Mammary epithelial cell (primary cell): ENCODE measurements at regions of chr2 and their contacts with region 1.

Region 1: GRCh38 chr2:239636808-239637207 is 236.0 kb upstream of the HDAC4 start:
- DNase-seq: no peak
- H3K4me3 ChIP-seq: no peak overlapping the region
- H3K27ac ChIP-seq: no peak overlapping the region
- H3K4me1 ChIP-seq: no peaks in the 10 kb centered on the region
- H3K27me3 ChIP-seq: no peaks in the 10 kb centered on the region
- CTCF ChIP-seq: no peak

Region 2: GRCh38 chr2:239143858-239144718 is 492.7 kb before region 1 on chr2:
- CTCF ChIA-PET with region 1: no interaction called
- dilution Hi-C with region 1: no loop called
- in situ Hi-C with region 1: no loop called
- intact Hi-C with region 1: no loop called
- DNase-seq: no peak
- H3K4me3 ChIP-seq: no peak overlapping the region
- H3K27ac ChIP-seq: no peak overlapping the region
- H3K4me1 ChIP-seq: no peaks in the 10 kb centered on the region
- H3K27me3 ChIP-seq: no peaks in the 10 kb centered on the region
- CTCF ChIP-seq: peak; percentile 50 to 65

Region 3: DNA sequence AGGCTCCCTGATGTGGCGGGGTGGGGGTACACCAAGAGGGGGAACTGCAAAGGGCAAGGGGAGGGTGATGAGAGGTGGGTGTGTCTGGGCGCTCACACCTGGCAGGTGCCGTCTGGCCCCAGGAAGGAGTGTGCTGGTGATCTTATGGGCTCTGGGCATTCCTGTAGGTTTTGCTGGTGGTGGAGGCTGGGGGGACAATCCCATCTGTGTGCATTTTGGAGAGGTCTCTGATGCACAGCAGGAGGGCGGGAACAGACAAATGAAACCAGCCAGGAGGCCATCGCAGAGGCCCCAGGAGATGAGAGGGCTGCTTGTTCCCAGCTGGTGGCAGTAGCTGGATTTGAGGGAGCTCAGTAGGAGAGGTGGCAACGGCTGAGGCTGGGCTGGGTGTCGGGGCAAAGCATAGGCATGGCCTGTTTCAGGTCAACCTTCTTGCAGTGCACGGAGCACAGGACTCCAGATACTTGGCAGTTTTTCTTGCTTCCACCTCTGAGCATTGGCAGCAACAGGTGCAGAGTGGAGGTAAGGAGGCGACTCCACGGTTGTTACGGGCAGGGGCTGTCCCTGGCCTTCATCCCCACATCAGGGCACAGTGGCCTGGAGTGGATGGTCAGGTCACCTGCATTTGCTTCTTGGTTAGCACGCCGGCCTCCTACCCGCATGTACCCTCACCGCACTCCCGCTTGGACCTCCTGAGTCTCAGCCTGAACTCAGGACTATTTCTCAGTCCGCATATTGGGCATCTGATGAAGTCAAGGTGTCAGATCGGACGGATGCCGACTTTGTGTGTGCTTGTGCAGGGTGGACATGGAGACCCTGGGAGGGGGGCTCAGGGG is 41.8 kb before region 1 on chr2:
- CTCF ChIA-PET with region 1: no interaction called
- dilution Hi-C with region 1: loop called (anchors 5 kb)
- in situ Hi-C with region 1: no loop called
- intact Hi-C with region 1: no loop called
- DNase-seq: no peak
- H3K4me3 ChIP-seq: no peak overlapping the region
- H3K27ac ChIP-seq: no peak overlapping the region
- H3K4me1 ChIP-seq: no peaks in the 10 kb centered on the region
- H3K27me3 ChIP-seq: no peaks in the 10 kb centered on the region
- CTCF ChIP-seq: no peak

Region 4: DNA sequence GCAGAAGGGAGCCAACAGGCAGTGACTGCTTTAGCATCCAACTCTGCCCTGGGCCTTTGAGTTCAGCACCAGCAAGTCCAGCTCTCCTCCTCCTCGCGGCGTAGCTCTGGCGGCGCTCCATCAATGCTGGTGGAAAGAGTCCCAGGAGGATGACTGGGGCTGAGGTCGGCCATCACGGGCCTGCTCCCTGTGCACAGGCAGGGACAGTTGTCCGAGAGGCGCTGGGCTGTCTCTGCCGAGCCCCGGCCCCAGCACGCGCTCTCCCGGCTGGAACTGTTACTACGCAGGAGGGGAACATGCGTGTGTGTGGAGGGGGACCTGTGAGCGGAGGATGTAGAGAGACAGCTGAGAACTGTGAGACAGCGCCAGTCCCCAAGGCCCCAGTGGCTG is 91.4 kb after region 1 on chr2:
- CTCF ChIA-PET with region 1: no interaction called
- dilution Hi-C with region 1: loop called (anchors 5 kb)
- in situ Hi-C with region 1: no loop called
- intact Hi-C with region 1: no loop called
- DNase-seq: no peak
- H3K4me3 ChIP-seq: no peak overlapping the region
- H3K27ac ChIP-seq: no peak overlapping the region
- H3K4me1 ChIP-seq: no peaks in the 10 kb centered on the region
- H3K27me3 ChIP-seq: no peaks in the 10 kb centered on the region
- CTCF ChIP-seq: no peak

Region 5: DNA sequence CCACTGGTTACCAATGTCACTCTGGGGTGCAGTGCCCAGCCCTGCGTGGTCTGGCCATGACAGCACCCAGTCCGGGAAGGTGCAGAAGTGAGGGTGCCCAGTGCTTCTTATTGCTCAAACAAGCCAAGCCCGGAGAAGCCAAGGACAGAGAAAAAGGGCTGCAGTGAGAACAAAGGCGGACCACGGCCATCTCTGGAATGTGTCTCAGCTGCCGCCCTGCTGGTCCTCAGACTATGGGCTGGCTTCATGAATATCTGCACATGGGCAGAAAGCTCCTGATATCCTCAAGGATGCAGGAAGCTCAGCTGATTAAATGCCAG is 470.6 kb after region 1 on chr2:
- CTCF ChIA-PET with region 1: no interaction called
- dilution Hi-C with region 1: no loop called
- in situ Hi-C with region 1: no loop called
- intact Hi-C with region 1: no loop called
- DNase-seq: no peak
- H3K4me3 ChIP-seq: no peak overlapping the region
- H3K27ac ChIP-seq: no peak overlapping the region
- H3K4me1 ChIP-seq: no peaks in the 10 kb centered on the region
- H3K27me3 ChIP-seq: no peaks in the 10 kb centered on the region
- CTCF ChIP-seq: no peak